Activated CD4-positive, alpha-beta memory T cell treated with anti-CD3 and anti-CD28 coated beads for 36 hours (primary cell): ENCODE measurements at regions of chr2 and their contacts with region 1.

Region 1: GRCh38 chr2:42848265-42848664 is 55.9 kb upstream of the HAAO start:
- DNase-seq: no peak
- H3K4me3 Mint-ChIP-seq: no peak overlapping the region
- H3K27ac Mint-ChIP-seq: no peak overlapping the region
- H3K4me1 Mint-ChIP-seq: no peaks in the 10 kb centered on the region
- H3K27me3 Mint-ChIP-seq: no peaks in the 10 kb centered on the region

Region 2: DNA sequence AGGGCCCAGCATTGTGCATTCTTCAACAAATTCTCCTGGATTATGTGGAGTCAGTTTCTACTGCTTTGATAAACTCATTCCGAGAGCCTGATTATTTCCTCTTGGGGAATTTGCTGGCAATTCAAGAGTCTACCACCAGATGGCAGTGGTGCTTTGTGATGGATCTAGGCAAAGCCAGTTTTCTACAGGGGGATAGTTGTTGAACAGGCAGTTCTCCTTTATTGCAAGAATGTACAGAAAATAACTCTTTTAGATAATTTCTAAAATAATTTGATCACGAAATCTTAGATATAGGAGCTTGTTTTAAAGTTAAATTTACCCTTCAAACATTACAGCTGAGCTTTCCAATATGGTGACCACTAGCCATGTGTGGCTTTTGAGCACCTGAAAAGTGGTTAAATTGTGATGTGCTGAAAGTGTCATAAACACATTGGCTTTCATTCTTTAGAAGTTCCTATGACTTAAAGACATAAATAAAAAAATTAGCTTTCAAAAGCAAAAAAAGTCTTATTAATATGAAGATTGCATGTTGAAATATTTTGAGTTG is 10.8 kb after region 1 on chr2:
- CTCF ChIA-PET with region 1: interaction called, 23 read pairs
- POLR2A ChIA-PET with region 1: no interaction called
- intact Hi-C with region 1: no loop called
- DNase-seq: peak; percentile 81
- H3K4me3 Mint-ChIP-seq: no peak overlapping the region
- H3K27ac Mint-ChIP-seq: no peak overlapping the region
- H3K4me1 Mint-ChIP-seq: peaks cover 6% of the 10 kb centered on the region
- H3K27me3 Mint-ChIP-seq: no peaks in the 10 kb centered on the region